B cell (primary cell): ENCODE measurements at regions of chr19 and their contacts with region 1.

Region 1: DNA sequence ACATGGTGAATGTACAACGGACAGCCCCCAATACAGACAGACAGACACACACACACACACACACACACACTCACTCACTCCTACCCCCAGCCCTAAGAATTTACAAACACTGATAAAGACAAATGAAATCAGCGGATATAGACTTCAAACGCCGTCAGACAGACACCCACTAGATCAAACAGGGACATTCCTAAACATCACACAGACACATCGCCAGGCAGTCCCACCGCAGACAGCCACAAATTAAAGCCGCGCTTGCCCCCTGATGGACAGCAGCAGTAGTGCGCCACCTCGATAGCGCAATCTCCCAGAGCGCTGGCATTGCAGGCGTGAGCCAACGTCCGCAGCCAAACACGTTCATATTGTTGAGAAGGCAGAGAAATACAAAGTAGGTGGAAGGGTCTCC is 24.7 kb upstream of the ADGRE1 start:
- DNase-seq: peak; percentile 92
- ATAC-seq: peak; percentile 85
- H3K4me3 ChIP-seq: peak overlapping the region in 3 of 5 experiments; percentile 48 to 73 (median 58)
- H3K4me3 Mint-ChIP-seq: peak overlapping the region; percentile 96
- H3K27ac ChIP-seq: peak overlapping the region; percentile 52 to 89
- H3K27ac Mint-ChIP-seq: peak overlapping the region; percentile 92
- H3K4me1 ChIP-seq: peaks cover 0 to 5% of the 10 kb centered on the region in 2 donors
- H3K4me1 Mint-ChIP-seq: peaks cover 11% of the 10 kb centered on the region
- H3K27me3 ChIP-seq: peaks cover 0 to 3% (median 0%) of the 10 kb centered on the region in 4 experiments
- H3K27me3 Mint-ChIP-seq: peaks cover 3% of the 10 kb centered on the region
- CTCF ChIP-seq: peak; percentile 84

Region 2: GRCh38 chr19:6125571-6125989 is 737.1 kb before region 1 on chr19:
- CTCF ChIA-PET with region 1: interaction called, 17 read pairs
- POLR2A ChIA-PET with region 1: no interaction called
- intact Hi-C with region 1: no loop called
- DNase-seq: peak; percentile 82
- ATAC-seq: peak; percentile 92
- H3K4me3 ChIP-seq: no peak overlapping the region
- H3K4me3 Mint-ChIP-seq: no peak overlapping the region
- H3K27ac ChIP-seq: no peak overlapping the region
- H3K27ac Mint-ChIP-seq: no peak overlapping the region
- H3K4me1 ChIP-seq: no peaks in the 10 kb centered on the region
- H3K4me1 Mint-ChIP-seq: no peaks in the 10 kb centered on the region
- H3K27me3 ChIP-seq: no peaks in the 10 kb centered on the region
- H3K27me3 Mint-ChIP-seq: peaks cover 6% of the 10 kb centered on the region
- CTCF ChIP-seq: peak; percentile 96

Region 3: GRCh38 chr19:6362027-6362350 is 500.7 kb before region 1 on chr19:
- CTCF ChIA-PET with region 1: no interaction called
- POLR2A ChIA-PET with region 1: no interaction called
- intact Hi-C with region 1: loop called (anchors 1 kb)
- DNase-seq: no peak
- ATAC-seq: no peak
- H3K4me3 ChIP-seq: peak overlapping the region in 4 of 5 experiments; percentile 60 to 72 (median 66)
- H3K4me3 Mint-ChIP-seq: peak overlapping the region; percentile 94
- H3K27ac ChIP-seq: peak overlapping the region; percentile 60 to 79
- H3K27ac Mint-ChIP-seq: peak overlapping the region; percentile 92
- H3K4me1 ChIP-seq: peaks cover 6 to 12% of the 10 kb centered on the region in 2 donors
- H3K4me1 Mint-ChIP-seq: peaks cover 14% of the 10 kb centered on the region
- H3K27me3 ChIP-seq: no peaks in the 10 kb centered on the region
- H3K27me3 Mint-ChIP-seq: no peaks in the 10 kb centered on the region
- CTCF ChIP-seq: no peak

Region 4: DNA sequence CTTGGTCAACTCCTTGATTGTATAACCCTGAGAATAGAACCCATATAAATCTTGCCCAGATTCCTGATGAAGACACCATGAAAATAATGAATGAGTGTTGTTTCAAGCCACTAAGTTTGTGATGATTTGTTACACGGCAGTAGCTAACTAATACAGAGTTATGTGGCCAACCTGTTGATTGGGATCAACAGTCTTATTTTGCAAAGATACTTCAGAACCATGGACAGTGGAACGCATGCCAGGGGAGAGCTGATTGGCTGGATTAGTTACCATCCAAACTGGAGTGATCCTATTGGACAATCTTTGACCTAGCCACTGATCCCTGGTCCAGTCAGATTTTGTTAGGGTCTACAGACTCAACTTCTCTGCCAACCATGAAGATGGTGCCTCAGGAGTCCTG is 298.3 kb before region 1 on chr19:
- CTCF ChIA-PET with region 1: interaction called, 10 read pairs
- POLR2A ChIA-PET with region 1: no interaction called
- intact Hi-C with region 1: no loop called
- DNase-seq: peak; percentile 42
- ATAC-seq: peak; percentile 14
- H3K4me3 ChIP-seq: no peak overlapping the region
- H3K4me3 Mint-ChIP-seq: no peak overlapping the region
- H3K27ac ChIP-seq: no peak overlapping the region
- H3K27ac Mint-ChIP-seq: no peak overlapping the region
- H3K4me1 ChIP-seq: no peaks in the 10 kb centered on the region
- H3K4me1 Mint-ChIP-seq: no peaks in the 10 kb centered on the region
- H3K27me3 ChIP-seq: peaks cover 0 to 8% (median 0%) of the 10 kb centered on the region in 4 experiments
- H3K27me3 Mint-ChIP-seq: peaks cover 18% of the 10 kb centered on the region
- CTCF ChIP-seq: no peak

Region 5: GRCh38 chr19:6718741-6719539 is 143.7 kb before region 1 on chr19:
- CTCF ChIA-PET with region 1: interaction called, 3 read pairs
- POLR2A ChIA-PET with region 1: no interaction called
- intact Hi-C with region 1: loop called (anchors 5 kb)
- DNase-seq: peak; percentile 44
- ATAC-seq: peak; percentile 19
- H3K4me3 ChIP-seq: no peak overlapping the region
- H3K4me3 Mint-ChIP-seq: no peak overlapping the region
- H3K27ac ChIP-seq: no peak overlapping the region
- H3K27ac Mint-ChIP-seq: no peak overlapping the region
- H3K4me1 ChIP-seq: peaks cover 32 to 35% of the 10 kb centered on the region in 2 donors
- H3K4me1 Mint-ChIP-seq: peaks cover 36% of the 10 kb centered on the region
- H3K27me3 ChIP-seq: no peaks in the 10 kb centered on the region
- H3K27me3 Mint-ChIP-seq: no peaks in the 10 kb centered on the region
- CTCF ChIP-seq: no peak

Region 6: DNA sequence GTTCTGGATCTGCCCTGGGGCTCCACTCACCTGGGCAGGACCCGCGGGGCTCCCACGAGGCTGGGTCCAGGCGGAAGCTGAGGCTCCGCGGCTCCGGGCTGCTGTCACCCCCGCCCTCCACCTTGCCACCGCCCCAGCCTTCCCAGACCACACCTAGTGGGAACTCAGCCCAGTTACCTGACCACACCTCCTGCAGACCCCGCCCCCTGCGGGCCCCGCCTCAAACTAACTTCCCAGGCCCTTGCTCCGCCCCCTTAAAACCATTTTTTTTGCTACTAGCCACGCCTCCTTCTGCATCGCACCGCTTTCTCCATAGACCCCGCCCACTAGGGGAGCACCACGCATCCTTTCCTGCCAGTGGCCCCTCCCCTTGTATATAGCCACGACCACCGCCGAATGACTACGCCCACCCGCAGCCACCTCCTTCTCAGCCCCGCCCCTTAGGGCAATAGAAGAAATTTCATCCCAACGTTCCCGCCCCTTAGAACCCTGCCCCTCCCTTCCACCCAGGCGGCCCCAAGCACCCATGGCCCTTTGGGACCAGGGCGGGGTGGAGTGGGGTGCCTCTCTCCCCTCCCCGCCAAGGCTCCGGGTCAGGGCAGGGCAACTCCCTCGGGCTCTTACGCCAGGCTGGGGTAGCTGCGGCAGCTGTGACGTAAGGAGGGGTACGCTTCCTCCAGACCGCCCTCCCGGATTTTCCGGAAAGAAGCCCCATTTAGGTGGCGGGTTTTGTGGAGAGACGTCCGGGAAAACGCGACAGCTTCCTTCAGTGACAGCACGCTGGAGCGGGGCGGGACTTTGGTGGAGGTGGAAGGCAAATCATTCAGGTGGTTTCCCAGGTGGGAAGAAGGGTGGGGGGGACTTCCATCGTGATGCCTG is 95.1 kb before region 1 on chr19 and contains the start of gene SH2D3A:
- CTCF ChIA-PET with region 1: interaction called, 21 read pairs
- POLR2A ChIA-PET with region 1: interaction called, 11 read pairs
- intact Hi-C with region 1: loop called (anchors 1 kb)
- DNase-seq: peak; percentile 98
- ATAC-seq: peak; percentile 69
- H3K4me3 ChIP-seq: peak within 1 kb of the TSS; percentile 36 to 81 (median 68)
- H3K4me3 Mint-ChIP-seq: peak within 1 kb of the TSS; percentile 93
- H3K27ac ChIP-seq: peak within 1 kb of the TSS; percentile 89 to 96
- H3K27ac Mint-ChIP-seq: peak within 1 kb of the TSS; percentile 95
- H3K4me1 ChIP-seq: peaks cover 28 to 46% of the 10 kb centered on the region in 2 donors
- H3K4me1 Mint-ChIP-seq: peaks cover 47% of the 10 kb centered on the region
- H3K27me3 ChIP-seq: no peaks in the 10 kb centered on the region
- H3K27me3 Mint-ChIP-seq: no peaks in the 10 kb centered on the region
- CTCF ChIP-seq: no peak
- total RNA-seq, gene SH2D3A: 33.5 and 36.1 TPM in 2 replicates

Region 7: DNA sequence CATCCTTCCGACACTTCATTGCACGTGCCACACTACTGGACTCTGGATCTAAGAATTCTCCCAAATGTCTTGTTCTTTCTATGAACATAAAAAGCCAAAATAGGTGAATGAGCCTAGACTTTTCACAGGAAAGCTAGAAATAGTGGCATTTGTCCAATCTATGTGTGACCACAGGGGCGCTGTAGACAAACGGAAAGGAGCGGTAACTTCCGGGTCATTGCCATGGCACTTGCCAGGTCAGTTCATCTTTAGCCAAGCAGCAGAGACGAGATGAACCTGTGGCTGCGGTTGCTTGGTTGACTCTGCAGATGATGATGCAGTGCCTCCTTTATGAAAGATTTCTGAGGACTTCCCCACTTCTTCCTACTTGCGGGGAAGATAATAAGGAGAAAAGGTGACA is 90.3 kb after region 1 on chr19:
- CTCF ChIA-PET with region 1: no interaction called
- POLR2A ChIA-PET with region 1: no interaction called
- intact Hi-C with region 1: no loop called
- DNase-seq: no peak
- ATAC-seq: no peak
- H3K4me3 ChIP-seq: no peak overlapping the region
- H3K4me3 Mint-ChIP-seq: no peak overlapping the region
- H3K27ac ChIP-seq: no peak overlapping the region
- H3K27ac Mint-ChIP-seq: no peak overlapping the region
- H3K4me1 ChIP-seq: no peaks in the 10 kb centered on the region
- H3K4me1 Mint-ChIP-seq: no peaks in the 10 kb centered on the region
- H3K27me3 ChIP-seq: peaks cover 0 to 21% (median 6%) of the 10 kb centered on the region in 4 experiments
- H3K27me3 Mint-ChIP-seq: peaks cover 32% of the 10 kb centered on the region
- CTCF ChIP-seq: no peak